Aorta (tissue), 5 donors: ENCODE measurements at regions of chr5 and their contacts with region 1.

Region 1: GRCh38 chr5:134101686-134102439 is 12.6 kb upstream of the TCF7 start:
- DNase-seq: peak in 1 of 2 donors; percentile 90
- ATAC-seq: peak; percentile 75
- H3K4me3 ChIP-seq: no peak overlapping the region
- H3K27ac ChIP-seq: no peak overlapping the region
- H3K4me1 ChIP-seq: no peaks in the 10 kb centered on the region
- H3K27me3 ChIP-seq: no peaks in the 10 kb centered on the region

Region 2: DNA sequence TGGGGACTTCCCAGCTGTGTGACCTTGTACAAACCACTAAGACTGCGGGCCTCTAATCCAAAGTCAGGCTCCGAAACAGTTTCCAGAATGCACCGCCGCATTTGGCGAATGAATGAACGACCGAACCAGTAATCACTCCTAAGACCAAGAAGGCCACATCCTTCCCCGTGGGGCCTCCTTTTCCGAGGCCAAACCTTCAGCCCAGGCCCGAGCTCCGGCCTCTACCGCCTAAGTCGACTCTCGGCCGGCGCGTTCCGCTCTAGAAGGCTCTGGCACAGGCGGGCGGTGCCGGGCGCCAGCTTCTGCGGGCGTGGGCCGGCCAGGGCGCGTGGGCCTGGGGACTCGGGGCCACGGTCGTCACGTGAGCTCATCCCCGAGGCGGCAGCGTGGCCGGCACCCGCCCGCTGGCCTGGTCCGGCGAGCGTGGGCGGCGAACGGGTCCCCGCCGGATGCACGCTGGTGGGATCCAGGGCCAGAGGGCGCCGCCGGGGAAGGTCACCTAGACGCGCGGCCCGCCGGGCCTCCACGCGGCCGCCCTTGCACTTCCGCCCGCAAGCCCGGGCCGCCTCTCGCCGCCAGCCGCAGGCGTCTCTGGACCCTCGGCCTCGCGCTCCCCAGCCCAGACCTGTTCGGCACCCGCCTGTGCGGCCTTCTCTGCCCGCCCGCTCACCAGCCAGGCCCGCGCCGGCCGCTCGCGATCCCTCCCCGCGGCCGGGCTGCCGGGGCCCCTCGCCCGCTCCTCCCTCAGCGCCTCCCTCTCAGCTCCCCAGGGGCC is 97.9 kb before region 1 on chr5:
- intact Hi-C with region 1: no loop called
- DNase-seq: peak; percentile 82 to 92
- ATAC-seq: peak; percentile 59
- H3K4me3 ChIP-seq: peak overlapping the region; percentile 68 to 92
- H3K27ac ChIP-seq: peak overlapping the region; percentile 95 to 98
- H3K4me1 ChIP-seq: peaks cover 0 to 5% of the 10 kb centered on the region in 2 donors
- H3K27me3 ChIP-seq: no peaks in the 10 kb centered on the region

Region 3: GRCh38 chr5:134059758-134060495 is 41.9 kb before region 1 on chr5:
- intact Hi-C with region 1: loop called in 1 of 2 experiments (anchors 5 kb)
- DNase-seq: peak in 1 of 2 donors; percentile 69
- ATAC-seq: no peak
- H3K4me3 ChIP-seq: no peak overlapping the region
- H3K27ac ChIP-seq: peak overlapping the region in 1 of 2 donors; percentile 29
- H3K4me1 ChIP-seq: no peaks in the 10 kb centered on the region
- H3K27me3 ChIP-seq: no peaks in the 10 kb centered on the region

Region 4: GRCh38 chr5:134140530-134141201 is 38.8 kb after region 1 on chr5:
- intact Hi-C with region 1: loop called (anchors 5 kb)
- DNase-seq: peak; percentile 71 to 81
- ATAC-seq: peak; percentile 66
- H3K4me3 ChIP-seq: no peak overlapping the region
- H3K27ac ChIP-seq: no peak overlapping the region
- H3K4me1 ChIP-seq: no peaks in the 10 kb centered on the region
- H3K27me3 ChIP-seq: no peaks in the 10 kb centered on the region

Region 5: DNA sequence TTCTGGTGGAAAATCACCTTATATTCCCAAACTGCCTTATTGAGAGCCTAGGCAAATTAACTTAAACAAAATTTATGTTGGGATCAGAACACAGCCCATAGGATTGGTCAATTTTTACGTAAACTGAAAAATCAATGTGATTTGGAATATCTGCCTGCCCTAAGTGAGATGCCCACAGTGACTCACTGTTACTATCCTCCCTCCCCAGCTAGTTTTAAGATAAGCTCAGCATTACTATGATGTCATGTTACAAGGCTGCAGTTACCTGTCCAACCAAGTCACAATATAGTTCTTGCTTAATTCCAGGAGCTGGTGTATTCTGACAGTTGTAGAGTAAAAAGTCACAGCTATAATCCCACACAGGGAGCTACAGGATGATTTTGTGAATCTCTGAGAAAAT is 51.8 kb after region 1 on chr5:
- intact Hi-C with region 1: no loop called
- DNase-seq: no peak
- ATAC-seq: no peak
- H3K4me3 ChIP-seq: no peak overlapping the region
- H3K27ac ChIP-seq: no peak overlapping the region
- H3K4me1 ChIP-seq: no peaks in the 10 kb centered on the region
- H3K27me3 ChIP-seq: no peaks in the 10 kb centered on the region